GM18951 (cell line): ENCODE measurements at regions of chr6 and their contacts with region 1.

Region 1: GRCh38 chr6:110378552-110378951 is 20.4 kb upstream of the METTL24 start:
- POLR2A ChIP-seq: no peak

Region 2: DNA sequence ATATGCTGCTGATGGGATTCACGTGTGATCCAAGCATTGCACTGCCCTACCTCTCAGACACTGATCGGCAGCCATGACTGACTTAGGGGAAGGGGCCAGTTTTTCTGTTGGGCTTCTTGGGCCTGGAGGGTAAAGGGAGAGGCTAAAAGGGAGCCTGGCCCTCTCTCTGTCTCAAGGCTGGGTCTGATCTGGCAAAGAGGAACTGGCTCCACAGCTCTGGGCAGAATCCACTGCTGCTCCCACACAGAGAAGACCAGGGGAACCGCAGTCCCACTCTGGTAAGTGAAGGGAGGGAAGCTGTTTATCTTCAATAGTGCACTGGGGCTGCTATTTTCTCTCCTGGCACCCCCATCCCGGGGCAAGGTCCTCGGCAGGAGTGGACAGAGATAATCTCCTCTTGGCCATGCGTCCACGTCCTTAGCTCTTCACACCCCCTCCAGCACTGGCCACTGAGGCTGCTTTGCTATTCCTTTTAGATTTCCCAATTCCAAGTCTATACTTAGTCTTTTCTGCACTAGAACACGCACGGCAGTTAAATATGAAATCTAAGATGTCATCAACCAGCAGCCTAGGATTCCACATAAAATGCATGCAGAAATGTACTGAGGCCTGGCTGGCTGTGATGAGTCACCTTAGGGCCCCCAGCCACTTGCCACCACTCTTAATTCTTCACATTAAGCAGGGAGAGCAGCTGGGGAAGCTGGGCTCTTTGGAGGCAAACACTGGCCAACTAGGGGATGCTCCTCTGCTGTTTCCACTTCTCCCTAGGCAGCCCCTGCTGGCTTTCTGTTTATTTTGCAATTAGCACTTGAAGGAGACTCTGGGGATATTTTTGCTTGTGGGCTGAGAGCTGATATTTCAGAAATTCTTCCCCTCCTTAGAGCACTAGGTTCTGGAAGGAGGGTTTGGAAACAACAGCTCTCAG is 1618.2 kb before region 1 on chr6:
- in situ Hi-C with region 1: no loop called
- POLR2A ChIP-seq: no peak

Region 3: GRCh38 chr6:110053395-110054240 is 324.9 kb before region 1 on chr6:
- in situ Hi-C with region 1: loop called (anchors 10 kb)
- POLR2A ChIP-seq: no peak